BJ (cell line): ENCODE measurements at regions of chr3 and their contacts with region 1.

Region 1: GRCh38 chr3:19972051-19972454 is 25.2 kb downstream of the RAB5A start:
- DNase-seq: peak; percentile 27
- H3K4me3 ChIP-seq: no peak overlapping the region
- H3K27me3 ChIP-seq: no peaks in the 10 kb centered on the region
- CTCF ChIP-seq: no peak

Region 2: DNA sequence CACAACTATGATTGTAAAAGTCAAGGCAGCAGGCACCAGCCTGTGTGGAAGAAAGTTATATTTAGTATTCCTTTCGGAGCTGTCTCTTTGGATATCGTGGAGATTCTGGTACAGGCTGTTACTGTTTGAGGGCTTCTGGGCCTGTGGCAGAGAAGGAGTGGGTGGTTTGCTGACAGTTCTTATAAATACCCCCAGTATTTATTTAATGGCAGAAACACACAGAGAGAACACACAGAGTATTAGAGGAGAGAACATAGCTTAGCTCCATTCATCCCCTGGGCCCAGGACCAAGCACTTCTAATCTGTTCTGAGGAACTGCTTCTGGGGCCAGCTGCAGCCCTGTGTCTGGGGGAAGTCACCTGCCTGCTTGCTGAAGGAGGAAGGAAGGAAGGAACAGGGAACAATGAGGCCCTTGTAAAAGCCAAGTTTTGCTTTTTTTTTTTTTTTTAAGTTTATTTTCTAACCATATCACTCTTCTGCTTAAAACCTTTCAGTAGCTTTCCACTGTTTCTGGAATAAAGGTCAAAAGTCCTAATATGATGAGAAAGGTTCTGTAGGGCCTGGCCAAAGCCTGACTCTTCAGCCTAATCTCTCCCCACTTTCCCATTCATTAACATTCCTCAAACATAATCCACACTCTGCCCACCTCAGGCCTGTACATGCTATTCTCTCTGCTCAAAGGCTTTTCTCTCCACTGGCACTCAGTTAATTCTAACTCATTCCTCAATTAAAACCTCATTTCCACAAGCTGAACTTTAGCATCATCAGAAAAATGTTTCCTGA is 51.8 kb after region 1 on chr3:
- CTCF ChIA-PET with region 1: no interaction called
- POLR2A ChIA-PET with region 1: interaction called, 10 read pairs
- DNase-seq: no peak
- H3K4me3 ChIP-seq: no peak overlapping the region
- H3K27me3 ChIP-seq: no peaks in the 10 kb centered on the region
- CTCF ChIP-seq: no peak